ENCODE measurements at regions of chr10 and their contacts with region 1.

Region 1: DNA sequence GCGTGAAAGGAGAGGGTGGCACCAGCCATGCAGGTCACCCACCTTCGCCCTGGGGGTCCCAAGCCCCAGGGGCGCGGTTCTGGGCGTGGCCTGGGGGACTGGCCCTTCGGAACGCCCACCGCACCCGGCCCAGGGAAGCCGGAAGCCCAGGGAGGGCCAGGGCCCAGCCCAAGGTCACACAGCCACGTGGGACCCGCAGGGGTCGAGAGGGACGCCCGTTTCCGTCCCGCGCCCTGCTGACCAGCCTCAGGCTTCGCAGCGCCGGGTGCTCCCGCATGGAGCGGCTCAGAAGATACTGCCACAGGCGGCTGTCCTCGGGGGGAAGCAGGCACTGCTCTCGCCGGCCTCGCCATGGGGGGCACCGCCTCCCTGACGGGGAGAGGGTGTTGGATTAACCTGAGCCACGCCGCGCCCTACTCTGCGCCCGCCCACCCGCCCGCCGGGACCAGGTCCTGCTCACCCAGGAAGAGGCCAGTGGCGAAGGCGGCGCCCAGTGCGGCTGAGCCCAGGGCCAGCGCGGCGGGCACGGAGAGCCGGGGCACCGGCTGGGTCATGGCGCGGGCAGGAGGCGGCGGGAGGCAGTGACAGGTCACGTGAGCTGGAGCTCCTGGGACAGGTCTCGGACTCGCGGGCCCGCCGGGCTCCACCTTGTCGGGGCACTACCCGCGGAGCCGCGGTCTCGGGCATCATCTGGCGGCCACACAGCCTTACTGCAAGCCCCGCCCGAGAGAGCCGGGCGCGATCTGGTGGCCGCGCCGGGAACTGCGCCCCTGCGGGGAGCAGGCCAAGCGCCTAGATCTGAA is at the start of gene COMTD1:
- H3K4me3 ChIP-seq: peak within 1 kb of the TSS; percentile 62
- H3K27ac ChIP-seq: peak within 1 kb of the TSS; percentile 92
- H3K4me1 ChIP-seq: no peaks in the 10 kb centered on the region; the same call in 1 of the 2 replicates
- CTCF ChIP-seq: peak; percentile 100

Region 2: DNA sequence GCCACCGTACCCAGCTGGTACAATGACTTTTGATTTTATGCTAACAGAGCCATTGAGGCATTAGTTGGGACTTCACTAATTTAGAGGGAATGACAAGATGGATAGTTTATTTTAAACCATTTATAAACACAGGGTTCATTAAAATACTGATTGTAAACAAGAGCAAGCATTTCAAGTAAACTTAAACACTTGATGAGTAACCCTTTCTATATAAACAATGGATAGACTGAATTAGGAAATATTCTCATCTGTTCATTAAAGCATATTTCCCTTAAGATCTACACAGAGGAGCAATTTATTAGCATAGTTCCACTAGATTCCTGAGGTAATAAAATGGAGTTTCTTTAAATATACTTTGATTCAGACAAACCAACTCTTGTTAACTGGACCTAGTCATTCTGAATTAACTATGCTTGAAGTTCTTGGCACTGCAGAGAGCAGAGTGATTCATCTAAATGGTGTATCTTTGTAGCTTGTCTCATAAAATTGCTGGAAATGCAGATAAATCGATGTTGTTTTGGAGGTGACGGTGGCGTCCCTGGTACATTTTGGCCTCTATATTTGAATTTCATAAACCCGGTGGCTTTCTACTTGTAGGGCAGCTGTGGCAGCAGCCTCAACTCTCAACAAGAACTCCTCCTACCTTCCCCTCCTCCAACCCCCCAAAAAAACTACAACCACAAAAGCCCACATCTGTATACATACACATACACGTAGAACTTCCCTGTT is 40.4 kb before region 1 on chr10:
- CTCF ChIA-PET with region 1: interaction called, 10 read pairs
- POLR2A ChIA-PET with region 1: interaction called, 5 read pairs
- H3K4me3 ChIP-seq: no peak overlapping the region
- H3K27ac ChIP-seq: no peak overlapping the region
- H3K4me1 ChIP-seq: no peaks in the 10 kb centered on the region
- CTCF ChIP-seq: no peak

Region 3: DNA sequence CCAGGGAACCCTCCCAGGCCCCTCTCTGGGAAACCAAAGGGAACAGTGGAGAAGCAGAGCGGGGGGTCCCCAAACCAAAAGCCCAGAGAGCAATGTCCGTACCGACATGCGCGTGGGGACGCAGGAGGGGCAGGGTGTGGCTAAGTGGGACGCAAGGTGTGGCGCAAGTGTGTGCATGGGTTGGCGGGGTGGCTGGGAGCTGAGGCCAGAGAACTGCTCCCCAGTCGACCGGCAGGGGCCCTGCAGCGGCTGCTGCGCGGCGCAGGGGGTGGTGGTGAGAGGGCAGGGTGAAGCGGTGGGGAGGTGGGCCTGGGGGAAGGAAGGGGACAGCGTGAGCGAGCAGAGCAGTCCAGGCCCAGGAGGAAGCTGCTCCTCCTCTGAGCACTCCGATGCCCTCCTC is 40.4 kb after region 1 on chr10:
- CTCF ChIA-PET with region 1: no interaction called
- POLR2A ChIA-PET with region 1: no interaction called
- H3K4me3 ChIP-seq: no peak overlapping the region
- H3K27ac ChIP-seq: no peak overlapping the region
- H3K4me1 ChIP-seq: no peaks in the 10 kb centered on the region
- CTCF ChIP-seq: no peak

Measured in HEK293 (cell line).